ENCODE measurements at regions of chr3 and their contacts with region 1.

Region 1: DNA sequence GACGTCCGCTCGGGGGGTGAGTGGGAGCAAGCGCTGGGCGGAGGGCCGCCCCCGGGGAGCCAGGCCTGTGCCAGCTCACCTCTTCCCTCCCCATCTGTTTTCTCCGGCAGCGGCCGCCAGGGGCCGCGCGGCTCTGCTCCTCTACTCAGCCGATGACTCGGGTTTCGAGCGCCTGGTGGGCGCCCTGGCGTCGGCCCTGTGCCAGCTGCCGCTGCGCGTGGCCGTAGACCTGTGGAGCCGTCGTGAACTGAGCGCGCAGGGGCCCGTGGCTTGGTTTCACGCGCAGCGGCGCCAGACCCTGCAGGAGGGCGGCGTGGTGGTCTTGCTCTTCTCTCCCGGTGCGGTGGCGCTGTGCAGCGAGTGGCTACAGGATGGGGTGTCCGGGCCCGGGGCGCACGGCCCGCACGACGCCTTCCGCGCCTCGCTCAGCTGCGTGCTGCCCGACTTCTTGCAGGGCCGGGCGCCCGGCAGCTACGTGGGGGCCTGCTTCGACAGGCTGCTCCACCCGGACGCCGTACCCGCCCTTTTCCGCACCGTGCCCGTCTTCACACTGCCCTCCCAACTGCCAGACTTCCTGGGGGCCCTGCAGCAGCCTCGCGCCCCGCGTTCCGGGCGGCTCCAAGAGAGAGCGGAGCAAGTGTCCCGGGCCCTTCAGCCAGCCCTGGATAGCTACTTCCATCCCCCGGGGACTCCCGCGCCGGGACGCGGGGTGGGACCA is 632 bp upstream of the CRELD1 start:
- DNase-seq: peak; percentile 83 to 93 (median 84)
- H3K4me3 ChIP-seq: peak overlapping the region; percentile 76
- H3K4me3 Mint-ChIP-seq: peak overlapping the region; percentile 88 to 99 (median 95)
- H3K27ac ChIP-seq: peak overlapping the region; percentile 90
- H3K27ac Mint-ChIP-seq: peak overlapping the region; percentile 93 to 100 (median 98)
- H3K4me1 ChIP-seq: peaks cover 32% of the 10 kb centered on the region
- H3K4me1 Mint-ChIP-seq: peaks cover 32 to 61% (median 33%) of the 10 kb centered on the region in 3 donors
- H3K27me3 ChIP-seq: no peaks in the 10 kb centered on the region
- H3K27me3 Mint-ChIP-seq: no peaks in the 10 kb centered on the region

Region 2: GRCh38 chr3:9915254-9916141 is 17.5 kb before region 1 on chr3:
- CTCF ChIA-PET with region 1: interaction called, 11 read pairs
- POLR2A ChIA-PET with region 1: interaction called, 14 read pairs
- DNase-seq: peak in 2 of 5 donors; percentile 12 to 52
- H3K4me3 ChIP-seq: peak overlapping the region; percentile 49
- H3K4me3 Mint-ChIP-seq: peak overlapping the region; percentile 74 to 93 (median 77)
- H3K27ac ChIP-seq: no peak overlapping the region
- H3K27ac Mint-ChIP-seq: peak overlapping the region in 2 of 8 donors; percentile 17 to 88
- H3K4me1 ChIP-seq: peaks cover 9% of the 10 kb centered on the region
- H3K4me1 Mint-ChIP-seq: peaks cover 7 to 21% (median 15%) of the 10 kb centered on the region in 3 donors
- H3K27me3 ChIP-seq: no peaks in the 10 kb centered on the region
- H3K27me3 Mint-ChIP-seq: peaks cover 7 to 16% of the 10 kb centered on the region in 2 donors

Region 3: GRCh38 chr3:9951962-9952805 is 19.2 kb after region 1 on chr3 and contains the start of gene PRRT3:
- CTCF ChIA-PET with region 1: interaction called, 32 read pairs
- POLR2A ChIA-PET with region 1: interaction called, 22 read pairs
- DNase-seq: peak; percentile 23 to 69 (median 42)
- H3K4me3 ChIP-seq: peak within 1 kb of the TSS; percentile 69
- H3K4me3 Mint-ChIP-seq: peak within 1 kb of the TSS; percentile 83 to 94 (median 86)
- H3K27ac ChIP-seq: no peak within 1 kb of the TSS
- H3K27ac Mint-ChIP-seq: peak within 1 kb of the TSS in 7 of 8 donors; percentile 43 to 92 (median 82)
- H3K4me1 ChIP-seq: peaks cover 11% of the 10 kb centered on the region
- H3K4me1 Mint-ChIP-seq: peaks cover 9 to 21% (median 11%) of the 10 kb centered on the region in 3 donors
- H3K27me3 ChIP-seq: no peaks in the 10 kb centered on the region
- H3K27me3 Mint-ChIP-seq: no peaks in the 10 kb centered on the region
- total RNA-seq, gene PRRT3: 12.1 to 12.3 TPM

Region 4: GRCh38 chr3:10026084-10026890 is 93.3 kb after region 1 on chr3 and contains the start of gene FANCD2:
- CTCF ChIA-PET with region 1: interaction called, 11 read pairs
- POLR2A ChIA-PET with region 1: interaction called, 5 read pairs
- DNase-seq: peak; percentile 85 to 94 (median 89)
- H3K4me3 ChIP-seq: peak within 1 kb of the TSS; percentile 81
- H3K4me3 Mint-ChIP-seq: peak within 1 kb of the TSS; percentile 96 to 98 (median 97)
- H3K27ac ChIP-seq: peak within 1 kb of the TSS; percentile 91
- H3K27ac Mint-ChIP-seq: peak within 1 kb of the TSS; percentile 96 to 99 (median 98)
- H3K4me1 ChIP-seq: peaks cover 26% of the 10 kb centered on the region
- H3K4me1 Mint-ChIP-seq: peaks cover 18 to 47% (median 26%) of the 10 kb centered on the region in 3 donors
- H3K27me3 ChIP-seq: no peaks in the 10 kb centered on the region
- H3K27me3 Mint-ChIP-seq: no peaks in the 10 kb centered on the region
- total RNA-seq, gene FANCD2: 55.9 to 56.2 TPM

Region 5: GRCh38 chr3:10286596-10287330 is 353.8 kb after region 1 on chr3:
- CTCF ChIA-PET with region 1: interaction called, 13 read pairs
- POLR2A ChIA-PET with region 1: no interaction called
- DNase-seq: peak in 2 of 5 donors; percentile 43 to 53
- H3K4me3 ChIP-seq: no peak overlapping the region
- H3K4me3 Mint-ChIP-seq: no peak overlapping the region
- H3K27ac ChIP-seq: no peak overlapping the region
- H3K27ac Mint-ChIP-seq: peak overlapping the region; percentile 17 to 66 (median 51)
- H3K4me1 ChIP-seq: peaks cover 15% of the 10 kb centered on the region
- H3K4me1 Mint-ChIP-seq: peaks cover 24 to 45% (median 24%) of the 10 kb centered on the region in 3 donors
- H3K27me3 ChIP-seq: no peaks in the 10 kb centered on the region
- H3K27me3 Mint-ChIP-seq: no peaks in the 10 kb centered on the region

Measured in CD8-positive, alpha-beta memory T cell (primary cell).